Endothelial cell of umbilical vein (primary cell): ENCODE measurements at regions of chr18 and their contacts with region 1.

Region 1: GRCh38 chr18:76803814-76804213 is 18.5 kb upstream of the ZNF236 start:
- DNase-seq: peak; percentile 63
- H3K4me3 ChIP-seq: peak overlapping the region in 1 of 3 experiments; percentile 40
- H3K27ac ChIP-seq: no peak overlapping the region
- H3K4me1 ChIP-seq: peaks cover 9% of the 10 kb centered on the region
- H3K27me3 ChIP-seq: no peaks in the 10 kb centered on the region
- CTCF ChIP-seq: peak; percentile 82 to 85
- POLR2A ChIP-seq: no peak

Region 2: DNA sequence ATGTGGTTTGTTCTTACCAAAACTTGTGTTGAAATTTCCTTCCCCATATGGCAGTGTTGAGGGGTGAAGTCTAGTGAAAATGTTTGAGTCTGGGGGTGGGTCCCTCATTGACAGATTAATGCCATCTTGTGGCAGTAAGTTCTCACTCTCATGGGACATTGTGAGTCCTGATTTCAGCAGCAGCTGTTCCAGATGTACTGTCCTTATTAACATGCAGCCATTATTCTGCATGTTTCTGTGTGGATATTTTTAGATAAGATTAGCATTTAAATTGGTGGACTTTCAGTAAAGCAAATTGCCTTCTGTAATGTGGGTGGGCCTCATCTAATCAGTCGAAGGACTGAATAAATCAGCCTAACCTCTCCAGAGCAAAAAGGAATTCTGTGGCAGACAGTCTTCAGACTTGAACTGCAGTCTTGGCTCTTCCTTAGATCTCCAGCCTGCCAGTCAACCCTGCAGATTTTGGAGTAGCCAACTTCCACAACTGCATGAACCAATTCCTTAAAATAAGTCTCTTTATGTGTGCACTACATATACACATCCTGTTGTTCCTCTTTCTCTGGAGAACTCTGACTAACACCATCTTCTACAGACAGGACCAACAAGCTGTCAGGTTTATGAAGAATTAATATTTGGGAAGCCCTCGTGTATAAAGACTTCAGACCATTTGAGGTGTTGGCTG is 170.1 kb before region 1 on chr18:
- CTCF ChIA-PET with region 1: no interaction called
- POLR2A ChIA-PET with region 1: no interaction called
- dilution Hi-C with region 1: no loop called
- intact Hi-C with region 1: no loop called
- DNase-seq: no peak
- H3K4me3 ChIP-seq: no peak overlapping the region
- H3K27ac ChIP-seq: no peak overlapping the region
- H3K4me1 ChIP-seq: no peaks in the 10 kb centered on the region
- H3K27me3 ChIP-seq: no peaks in the 10 kb centered on the region
- CTCF ChIP-seq: no peak
- POLR2A ChIP-seq: no peak

Region 3: DNA sequence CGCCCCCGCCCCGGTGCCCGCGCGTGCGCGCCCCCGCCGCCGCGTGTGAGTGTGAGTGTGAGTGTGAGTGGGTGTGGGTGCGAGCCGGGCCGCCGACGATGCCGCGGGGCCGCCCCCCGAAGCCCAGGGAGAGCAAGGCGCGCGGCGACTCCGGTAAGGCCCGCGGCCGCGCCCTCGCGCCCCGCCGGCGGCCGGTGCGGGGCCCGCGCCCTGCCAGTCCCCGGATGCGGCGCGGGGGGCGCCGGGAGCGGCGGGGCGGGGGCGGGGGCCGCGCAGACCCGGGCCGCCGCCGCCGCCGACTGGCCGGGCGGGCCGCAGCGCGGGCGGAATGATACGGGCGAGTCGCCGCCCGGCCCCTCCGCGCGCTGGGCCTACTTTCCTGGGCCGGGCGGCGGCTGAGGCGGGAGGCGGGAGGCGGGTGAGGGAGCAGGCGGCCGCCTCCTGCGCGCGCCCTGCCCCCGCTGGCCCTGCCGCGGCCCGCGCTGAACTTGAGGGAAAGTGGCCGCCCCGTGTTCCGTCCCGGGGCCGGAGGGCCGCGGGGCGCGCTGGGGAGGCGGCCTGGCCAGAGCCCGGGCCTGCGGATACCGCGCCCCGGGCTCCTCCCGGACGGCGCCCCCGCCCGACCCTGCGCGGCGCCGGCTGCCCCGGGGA is 18.8 kb after region 1 on chr18 and contains the start of gene ZNF236:
- CTCF ChIA-PET with region 1: interaction called, 91 read pairs
- POLR2A ChIA-PET with region 1: no interaction called
- dilution Hi-C with region 1: no loop called
- intact Hi-C with region 1: loop called (anchors 1 kb)
- DNase-seq: peak; percentile 44
- H3K4me3 ChIP-seq: peak within 1 kb of the TSS; percentile 54 to 98 (median 75)
- H3K27ac ChIP-seq: peak within 1 kb of the TSS; percentile 63
- H3K4me1 ChIP-seq: peaks cover 25% of the 10 kb centered on the region
- H3K27me3 ChIP-seq: no peaks in the 10 kb centered on the region
- CTCF ChIP-seq: no peak
- POLR2A ChIP-seq: peak; percentile 73
- total RNA-seq, gene ZNF236: 13.6 and 14.7 TPM in 2 replicates

Region 4: GRCh38 chr18:76859474-76860339 is 55.9 kb after region 1 on chr18:
- CTCF ChIA-PET with region 1: interaction called, 4 read pairs
- POLR2A ChIA-PET with region 1: no interaction called
- dilution Hi-C with region 1: no loop called
- intact Hi-C with region 1: loop called (anchors 5 kb)
- DNase-seq: no peak
- H3K4me3 ChIP-seq: no peak overlapping the region
- H3K27ac ChIP-seq: no peak overlapping the region
- H3K4me1 ChIP-seq: no peaks in the 10 kb centered on the region
- H3K27me3 ChIP-seq: no peaks in the 10 kb centered on the region
- CTCF ChIP-seq: no peak
- POLR2A ChIP-seq: no peak

Region 5: GRCh38 chr18:76922107-76922506 is 118.3 kb after region 1 on chr18:
- CTCF ChIA-PET with region 1: interaction called, 9 read pairs
- POLR2A ChIA-PET with region 1: no interaction called
- dilution Hi-C with region 1: no loop called
- intact Hi-C with region 1: loop called (anchors 2 kb)
- DNase-seq: peak; percentile 66
- H3K4me3 ChIP-seq: no peak overlapping the region
- H3K27ac ChIP-seq: no peak overlapping the region
- H3K4me1 ChIP-seq: no peaks in the 10 kb centered on the region
- H3K27me3 ChIP-seq: no peaks in the 10 kb centered on the region
- CTCF ChIP-seq: peak; percentile 47 to 76
- POLR2A ChIP-seq: no peak

Region 6: DNA sequence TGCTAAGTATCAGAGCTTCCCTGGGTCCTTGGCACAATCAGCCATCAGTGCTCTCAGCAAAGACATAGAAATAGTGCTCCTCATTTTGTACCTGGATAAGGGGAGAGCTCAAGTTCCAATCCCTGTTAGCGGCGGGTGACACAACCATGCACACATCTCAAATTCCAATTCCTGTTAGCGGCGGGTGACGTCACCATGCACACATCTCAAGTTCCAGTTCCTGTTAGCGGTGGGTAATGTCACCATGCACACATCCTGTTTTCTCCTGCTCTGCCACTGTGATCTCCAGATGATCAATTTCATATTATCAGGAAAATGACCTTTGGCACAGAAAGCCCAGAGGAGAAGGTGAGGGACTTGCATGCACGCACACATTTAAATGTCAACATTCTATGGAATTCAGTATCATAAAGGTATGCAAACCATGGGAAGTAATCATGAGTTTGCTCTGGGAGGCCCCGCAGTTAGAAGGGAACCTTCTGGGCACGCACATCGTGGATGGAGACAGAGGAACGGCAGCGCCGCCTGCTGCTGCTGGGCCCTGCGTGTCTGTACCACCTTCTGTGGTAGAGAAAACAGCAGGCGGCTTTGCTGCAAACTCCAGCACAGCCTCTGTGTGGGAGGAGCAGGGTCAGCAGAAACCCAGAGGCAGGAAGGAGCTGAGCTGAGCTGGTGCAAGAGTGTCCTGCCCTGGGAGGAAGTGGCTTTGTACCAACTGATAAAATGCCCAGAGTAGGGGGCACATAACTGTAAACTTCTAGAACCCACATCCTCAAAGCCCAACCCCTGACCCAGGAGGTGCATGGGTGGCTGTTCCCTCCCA is 251.0 kb after region 1 on chr18:
- CTCF ChIA-PET with region 1: interaction called, 8 read pairs
- POLR2A ChIA-PET with region 1: no interaction called
- dilution Hi-C with region 1: no loop called
- intact Hi-C with region 1: loop called (anchors 1 kb)
- DNase-seq: peak; percentile 88
- H3K4me3 ChIP-seq: peak overlapping the region in 1 of 3 experiments; percentile 17
- H3K27ac ChIP-seq: peak overlapping the region; percentile 37
- H3K4me1 ChIP-seq: peaks cover 22% of the 10 kb centered on the region
- H3K27me3 ChIP-seq: no peaks in the 10 kb centered on the region
- CTCF ChIP-seq: peak; percentile 64 to 84
- POLR2A ChIP-seq: no peak